AG04449 (cell line): ENCODE measurements at regions of chr10 and their contacts with region 1.

Region 1: GRCh38 chr10:105950410-105950809 is 1214.1 kb downstream of the SORCS1 start:
- DNase-seq: no peak
- H3K4me3 ChIP-seq: no peak overlapping the region
- CTCF ChIP-seq: peak; percentile 60

Region 2: GRCh38 chr10:105797234-105797890 is 153.0 kb before region 1 on chr10:
- CTCF ChIA-PET with region 1: no interaction called
- POLR2A ChIA-PET with region 1: no interaction called
- DNase-seq: no peak
- H3K4me3 ChIP-seq: no peak overlapping the region
- CTCF ChIP-seq: no peak

Region 3: GRCh38 chr10:105914432-105914831 is 36.0 kb before region 1 on chr10:
- CTCF ChIA-PET with region 1: no interaction called
- POLR2A ChIA-PET with region 1: no interaction called
- DNase-seq: no peak
- H3K4me3 ChIP-seq: no peak overlapping the region
- CTCF ChIP-seq: no peak

Region 4: GRCh38 chr10:105974803-105975456 is 24.5 kb after region 1 on chr10:
- CTCF ChIA-PET with region 1: interaction called, 26 read pairs
- POLR2A ChIA-PET with region 1: no interaction called
- DNase-seq: no peak
- H3K4me3 ChIP-seq: no peak overlapping the region
- CTCF ChIP-seq: peak; percentile 59

Region 5: DNA sequence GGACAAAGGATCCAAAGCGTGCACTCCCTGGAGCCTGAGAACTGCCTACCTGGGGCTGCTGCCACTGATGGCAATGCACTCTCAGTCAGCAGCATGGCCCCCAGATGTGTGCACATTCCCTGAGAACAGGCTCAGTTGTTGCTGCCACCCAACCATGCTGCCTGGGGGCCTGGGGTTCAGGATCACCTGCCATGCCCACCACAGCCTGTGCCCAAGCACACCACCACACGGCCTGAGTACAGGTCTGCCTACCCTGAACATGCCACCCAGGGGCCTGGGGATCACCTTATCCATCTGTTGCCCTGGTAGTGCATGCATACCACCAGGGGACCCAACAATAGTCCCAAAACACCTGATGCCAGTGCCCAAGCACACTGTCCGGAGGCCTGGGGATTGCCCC is 39.6 kb after region 1 on chr10:
- CTCF ChIA-PET with region 1: no interaction called
- POLR2A ChIA-PET with region 1: no interaction called
- DNase-seq: no peak
- H3K4me3 ChIP-seq: no peak overlapping the region
- CTCF ChIP-seq: no peak

Region 6: GRCh38 chr10:106043863-106044262 is 93.5 kb after region 1 on chr10:
- CTCF ChIA-PET with region 1: no interaction called
- POLR2A ChIA-PET with region 1: no interaction called
- DNase-seq: no peak
- H3K4me3 ChIP-seq: no peak overlapping the region
- CTCF ChIP-seq: no peak

Region 7: DNA sequence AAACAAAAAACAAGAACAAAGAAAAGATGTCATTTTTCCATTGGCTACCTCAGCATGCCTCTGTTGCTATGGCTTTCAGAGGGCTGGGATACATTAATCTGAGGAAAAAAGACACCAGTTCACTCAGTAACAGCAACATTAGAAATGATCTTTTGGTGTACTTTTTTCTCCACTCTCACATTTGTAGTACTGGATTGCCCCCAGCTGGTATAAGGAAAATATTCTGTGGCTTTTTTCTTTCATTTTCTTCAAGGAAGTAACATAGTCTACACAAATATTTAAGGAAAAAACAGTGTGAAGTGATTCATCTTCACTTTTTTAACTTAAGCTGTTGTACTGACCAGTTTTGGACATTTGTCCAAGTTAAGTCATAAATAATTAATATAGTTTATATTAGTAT is 731.8 kb after region 1 on chr10:
- CTCF ChIA-PET with region 1: interaction called, 30 read pairs
- POLR2A ChIA-PET with region 1: no interaction called
- DNase-seq: no peak
- H3K4me3 ChIP-seq: no peak overlapping the region
- CTCF ChIP-seq: no peak